Activated CD4-positive, alpha-beta memory T cell treated with anti-CD3 and anti-CD28 coated beads for 36 hours (primary cell): ENCODE measurements at regions of chr11 and their contacts with region 1.

Region 1: GRCh38 chr11:77619576-77620198 is 17.9 kb downstream of the CLNS1A start:
- DNase-seq: no peak
- H3K4me3 Mint-ChIP-seq: no peak overlapping the region
- H3K27ac Mint-ChIP-seq: peak overlapping the region; percentile 31
- H3K4me1 Mint-ChIP-seq: peaks cover 3% of the 10 kb centered on the region
- H3K27me3 Mint-ChIP-seq: no peaks in the 10 kb centered on the region

Region 2: GRCh38 chr11:77547863-77548551 is 71.7 kb before region 1 on chr11:
- CTCF ChIA-PET with region 1: interaction called, 5 read pairs
- POLR2A ChIA-PET with region 1: no interaction called
- intact Hi-C with region 1: loop called (anchors 1 kb)
- DNase-seq: peak; percentile 21
- H3K4me3 Mint-ChIP-seq: no peak overlapping the region
- H3K27ac Mint-ChIP-seq: no peak overlapping the region
- H3K4me1 Mint-ChIP-seq: peaks cover 2% of the 10 kb centered on the region
- H3K27me3 Mint-ChIP-seq: no peaks in the 10 kb centered on the region

Region 3: DNA sequence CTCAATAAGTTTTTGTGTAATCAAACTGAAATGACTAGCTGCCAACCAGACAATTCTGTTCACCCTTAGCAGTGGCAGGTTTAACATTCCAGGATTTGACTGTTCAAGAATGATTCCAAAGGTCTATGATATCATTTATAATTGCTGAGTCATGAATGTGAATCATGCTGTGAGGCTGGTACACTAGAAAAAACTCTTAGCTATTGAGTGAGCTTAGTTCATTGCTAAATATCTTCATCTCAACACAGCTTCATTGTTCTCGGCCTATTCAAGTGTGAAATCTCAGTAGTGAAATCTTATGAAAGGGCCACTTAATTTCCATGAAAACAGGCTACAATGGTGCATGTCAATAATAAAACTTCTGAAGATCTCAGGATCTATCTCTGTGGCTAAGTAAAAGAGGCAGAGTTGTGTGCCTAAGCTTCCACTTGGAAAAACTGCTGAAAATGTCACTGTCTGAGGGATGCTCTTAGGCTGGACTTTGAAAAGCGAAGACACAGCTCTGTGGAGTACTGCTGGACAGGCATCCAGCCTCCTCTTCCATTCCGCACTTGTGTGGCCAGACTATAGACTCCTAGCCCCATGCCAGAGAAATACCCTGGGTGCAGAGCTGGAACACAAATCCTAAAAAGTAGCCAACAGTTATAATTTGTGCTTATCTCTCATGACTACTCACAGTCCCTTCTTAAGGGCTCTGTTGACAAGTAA is 17.2 kb before region 1 on chr11:
- CTCF ChIA-PET with region 1: interaction called, 22 read pairs
- POLR2A ChIA-PET with region 1: no interaction called
- intact Hi-C with region 1: no loop called
- DNase-seq: no peak
- H3K4me3 Mint-ChIP-seq: no peak overlapping the region
- H3K27ac Mint-ChIP-seq: no peak overlapping the region
- H3K4me1 Mint-ChIP-seq: no peaks in the 10 kb centered on the region
- H3K27me3 Mint-ChIP-seq: no peaks in the 10 kb centered on the region

Region 4: DNA sequence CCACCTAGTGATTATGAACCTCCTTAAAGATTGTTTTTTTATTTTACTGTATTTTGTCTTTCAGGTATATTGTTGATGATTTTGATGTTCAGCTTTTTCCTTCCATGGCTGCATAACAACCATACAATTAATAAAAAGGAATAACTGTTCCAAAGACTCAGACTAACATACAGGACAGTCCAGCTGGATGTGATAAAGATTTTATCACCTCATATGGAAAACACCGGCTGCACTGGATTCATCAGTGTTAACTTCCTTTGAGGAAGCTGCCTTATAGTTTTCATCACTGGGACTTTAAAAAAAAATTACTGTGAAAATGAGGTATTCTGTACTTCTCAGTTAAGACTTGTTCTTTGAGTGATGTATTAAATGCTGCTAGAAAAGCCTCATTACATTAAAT is 10.5 kb before region 1 on chr11:
- CTCF ChIA-PET with region 1: interaction called, 22 read pairs
- POLR2A ChIA-PET with region 1: no interaction called
- intact Hi-C with region 1: no loop called
- DNase-seq: no peak
- H3K4me3 Mint-ChIP-seq: no peak overlapping the region
- H3K27ac Mint-ChIP-seq: no peak overlapping the region
- H3K4me1 Mint-ChIP-seq: no peaks in the 10 kb centered on the region
- H3K27me3 Mint-ChIP-seq: no peaks in the 10 kb centered on the region

Region 5: DNA sequence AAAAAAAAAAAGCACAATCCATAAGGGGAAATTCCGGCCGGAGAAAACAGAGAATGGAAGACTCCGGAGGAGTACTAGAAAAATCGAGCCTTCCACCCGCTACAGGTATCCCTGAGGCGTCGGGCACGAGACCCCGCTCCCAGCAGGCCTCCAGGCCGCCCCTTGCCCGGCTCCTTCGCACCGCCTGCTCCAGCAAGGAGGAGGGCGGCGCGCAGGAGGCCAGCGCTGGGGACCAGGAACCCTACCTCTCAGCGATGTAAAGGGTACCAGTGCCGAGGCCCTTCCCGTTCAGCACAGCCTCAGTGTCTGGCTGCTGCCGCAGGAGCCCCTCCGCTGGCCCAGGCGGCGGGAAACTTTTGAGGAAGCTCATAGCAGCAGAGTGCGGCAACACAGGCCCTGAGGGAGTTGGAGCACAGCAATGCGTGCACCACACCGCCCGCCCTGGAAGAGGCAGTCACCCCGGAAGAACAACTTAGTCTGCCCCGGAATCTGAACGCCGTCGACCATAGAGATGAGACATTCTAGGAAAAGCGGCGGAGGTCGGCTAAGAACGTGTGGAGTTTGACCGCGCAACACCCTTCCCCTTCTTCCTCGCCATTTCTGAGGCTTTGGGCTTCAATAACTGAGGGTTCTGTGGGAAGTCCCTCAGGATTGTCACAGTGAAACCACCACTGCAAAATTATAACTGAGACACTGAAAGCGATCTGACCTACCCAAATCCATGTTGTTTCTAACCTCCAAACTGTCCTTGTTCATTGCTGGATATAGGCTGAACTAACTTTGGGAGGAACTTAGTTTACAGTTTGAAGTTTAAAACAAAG is 17.9 kb after region 1 on chr11 and contains the start of gene CLNS1A:
- CTCF ChIA-PET with region 1: interaction called, 11 read pairs
- POLR2A ChIA-PET with region 1: no interaction called
- intact Hi-C with region 1: no loop called
- DNase-seq: peak; percentile 90
- H3K4me3 Mint-ChIP-seq: peak within 1 kb of the TSS; percentile 95
- H3K27ac Mint-ChIP-seq: peak within 1 kb of the TSS; percentile 95
- H3K4me1 Mint-ChIP-seq: peaks cover 35% of the 10 kb centered on the region
- H3K27me3 Mint-ChIP-seq: no peaks in the 10 kb centered on the region
- total RNA-seq, gene CLNS1A: 199 to 200 TPM